Upper lobe of right lung (tissue), 1 donor: ENCODE measurements at regions of chr12 and their contacts with region 1.

Region 1: DNA sequence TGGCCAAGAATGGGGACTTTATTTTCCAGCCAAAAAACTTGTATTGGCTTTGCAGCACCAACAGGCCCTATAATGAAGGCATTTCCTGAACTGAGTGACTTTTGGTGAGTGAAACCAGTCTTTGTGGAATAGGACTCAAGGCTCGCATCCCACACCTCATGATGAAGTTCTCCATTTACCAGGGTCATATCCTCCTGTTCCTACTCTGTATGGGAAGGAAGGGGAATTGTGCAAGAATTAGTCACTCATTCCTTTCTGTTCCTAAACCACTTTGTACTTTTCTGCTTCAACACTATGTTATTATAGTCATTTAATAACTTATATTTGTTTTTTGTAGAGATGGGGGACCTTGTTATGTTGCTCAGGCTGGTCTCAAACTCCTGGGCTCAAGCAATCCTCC is 2.3 kb upstream of the SPATS2 start:
- DNase-seq: no peak
- ATAC-seq: peak; percentile 14
- H3K4me3 ChIP-seq: no peak overlapping the region
- H3K27ac ChIP-seq: no peak overlapping the region
- H3K4me1 ChIP-seq: peaks cover 23% of the 10 kb centered on the region
- H3K27me3 ChIP-seq: no peaks in the 10 kb centered on the region
- CTCF ChIP-seq: no peak

Region 2: GRCh38 chr12:49507139-49507538 is 142.2 kb after region 1 on chr12:
- intact Hi-C with region 1: loop called (anchors 5 kb)
- DNase-seq: no peak
- ATAC-seq: no peak
- H3K4me3 ChIP-seq: no peak overlapping the region
- H3K27ac ChIP-seq: no peak overlapping the region
- H3K4me1 ChIP-seq: no peaks in the 10 kb centered on the region
- H3K27me3 ChIP-seq: no peaks in the 10 kb centered on the region
- CTCF ChIP-seq: no peak